ENCODE measurements at regions of chr15 and their contacts with region 1.

Region 1: DNA sequence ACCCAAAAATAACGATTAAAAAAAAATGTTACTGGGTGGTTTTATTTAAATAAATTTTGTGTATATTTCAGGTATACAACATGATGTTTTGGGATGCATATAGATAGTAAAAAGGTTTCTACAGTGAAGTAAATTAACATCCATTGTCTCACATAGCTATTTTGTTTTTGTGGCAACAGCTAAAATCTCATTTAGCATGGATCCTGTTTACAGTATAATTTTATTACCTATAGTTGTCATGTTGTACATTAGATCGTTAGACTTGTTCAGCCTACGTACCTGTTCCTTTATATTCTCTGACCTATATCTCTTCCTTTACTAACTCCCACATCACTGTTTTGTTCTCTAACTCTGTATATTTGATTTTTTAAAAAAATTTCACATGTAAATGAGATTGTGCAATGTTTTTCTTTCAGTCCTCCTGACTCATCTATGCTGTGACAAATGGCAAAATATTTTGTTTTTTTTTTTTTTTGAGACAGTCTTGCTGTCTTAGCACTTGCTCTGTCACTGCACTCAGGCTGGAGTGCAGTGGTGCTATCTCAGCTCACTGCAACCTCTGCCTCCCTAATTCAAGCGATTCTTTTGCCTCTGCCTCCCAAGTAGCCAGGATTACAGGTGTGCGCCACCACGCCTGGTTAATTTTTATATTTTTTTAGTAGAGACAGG is 45.6 kb downstream of the OIP5 start:
- DNase-seq: no peak
- H3K4me3 ChIP-seq: no peak overlapping the region
- CTCF ChIP-seq: no peak

Region 2: DNA sequence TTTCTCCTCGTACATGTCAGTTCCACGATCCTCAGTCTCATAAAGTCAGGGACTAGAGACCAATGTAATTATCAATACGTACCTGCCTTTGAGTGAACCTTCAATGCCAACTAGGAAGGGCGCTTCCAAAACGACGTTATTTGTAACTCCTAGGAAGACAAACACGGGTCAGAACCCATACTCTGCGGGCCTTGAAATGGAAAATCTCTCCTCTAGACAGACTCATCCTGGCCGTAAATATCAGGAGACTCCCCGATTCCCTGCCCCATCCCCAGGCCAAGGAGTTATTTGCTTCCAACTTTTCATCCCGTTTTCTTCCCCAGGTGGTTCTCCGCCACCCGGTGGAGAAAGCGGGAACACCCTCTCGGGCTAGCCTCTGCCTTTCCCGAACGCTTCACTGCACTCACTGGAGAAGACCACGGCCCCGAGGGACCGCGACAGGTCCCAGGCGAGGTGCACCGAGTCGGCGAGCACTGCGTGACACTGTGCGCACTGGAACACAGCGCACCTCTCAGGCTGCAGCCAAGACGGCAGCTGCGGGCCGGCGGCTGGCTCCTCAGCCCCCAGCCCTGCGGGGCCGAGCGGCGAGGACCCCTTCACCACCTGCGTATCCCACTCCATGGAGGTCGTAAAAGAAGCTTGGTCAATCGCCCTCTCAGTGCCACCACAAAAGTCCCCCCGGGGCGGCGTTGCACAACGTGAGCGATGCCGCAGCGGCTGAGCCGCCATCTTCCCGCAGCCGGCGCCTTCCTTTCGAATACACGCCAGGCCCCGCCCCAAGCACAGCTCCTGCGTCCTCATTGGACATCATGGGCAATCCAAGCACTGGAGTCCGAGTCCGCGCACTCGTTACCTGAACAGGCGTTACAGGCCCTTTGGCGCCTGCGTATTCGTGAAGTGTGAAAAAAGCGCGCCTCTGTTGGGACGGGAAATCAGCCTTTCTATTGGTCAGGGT is 45.3 kb after region 1 on chr15 and contains the start of gene OIP5:
- CTCF ChIA-PET with region 1: interaction called, 10 read pairs
- POLR2A ChIA-PET with region 1: no interaction called
- DNase-seq: peak; percentile 96
- H3K4me3 ChIP-seq: peak within 1 kb of the TSS; percentile 94
- CTCF ChIP-seq: peak; percentile 76